Caco-2 (cell line): ENCODE measurements at regions of chr1 and their contacts with region 1.

Region 1: GRCh38 chr1:155396874-155397476 is 76.3 kb downstream of the RUSC1 start:
- DNase-seq: peak; percentile 12 to 42
- H3K4me3 ChIP-seq: no peak overlapping the region
- H3K4me3 Mint-ChIP-seq: no peak overlapping the region
- H3K27ac Mint-ChIP-seq: no peak overlapping the region
- H3K4me1 ChIP-seq: peaks cover 10% of the 10 kb centered on the region; the same call in 1 of the 2 replicates
- H3K4me1 Mint-ChIP-seq: peaks cover 7% of the 10 kb centered on the region
- H3K27me3 ChIP-seq: no peaks in the 10 kb centered on the region
- H3K27me3 Mint-ChIP-seq: no peaks in the 10 kb centered on the region
- CTCF ChIP-seq: no peak

Region 2: DNA sequence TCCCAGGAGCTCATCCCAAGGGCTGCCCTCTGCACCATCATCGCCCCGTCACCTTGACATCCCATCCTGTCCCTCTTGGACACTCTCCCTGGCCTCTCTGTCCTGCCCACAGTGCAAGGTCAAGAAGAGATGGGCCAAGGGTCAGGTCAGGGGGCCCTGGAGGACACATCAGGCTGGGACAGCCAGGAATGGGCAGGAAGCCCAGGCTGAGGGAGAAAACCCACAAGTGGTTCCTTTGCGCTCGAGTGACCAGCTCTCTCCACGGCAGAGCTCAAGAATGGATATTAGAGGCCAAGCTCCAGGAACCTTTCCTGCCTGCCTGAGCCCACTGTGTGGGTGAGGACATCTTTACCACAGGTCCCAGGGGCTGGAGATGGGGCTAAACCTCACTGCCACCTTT is 567.9 kb before region 1 on chr1:
- CTCF ChIA-PET with region 1: no interaction called
- POLR2A ChIA-PET with region 1: no interaction called
- intact Hi-C with region 1: loop called (anchors 5 kb)
- DNase-seq: no peak
- H3K4me3 ChIP-seq: no peak overlapping the region
- H3K4me3 Mint-ChIP-seq: no peak overlapping the region
- H3K27ac Mint-ChIP-seq: no peak overlapping the region
- H3K4me1 ChIP-seq: no peaks in the 10 kb centered on the region
- H3K4me1 Mint-ChIP-seq: no peaks in the 10 kb centered on the region
- H3K27me3 ChIP-seq: no peaks in the 10 kb centered on the region
- H3K27me3 Mint-ChIP-seq: peaks cover 3% of the 10 kb centered on the region
- CTCF ChIP-seq: no peak